ENCODE measurements at regions of chr4 and their contacts with region 1.

Region 1: GRCh38 chr4:102778720-102779119 is 18.0 kb upstream of the MANBA start:
- DNase-seq: peak; percentile 37 to 76 (median 62)
- H3K4me3 ChIP-seq: no peak overlapping the region
- H3K27ac ChIP-seq: no peak overlapping the region
- H3K4me1 ChIP-seq: peaks cover 5 to 6% of the 10 kb centered on the region in 2 donors
- H3K27me3 ChIP-seq: no peaks in the 10 kb centered on the region
- CTCF ChIP-seq: no peak
- POLR2A ChIP-seq: no peak

Region 2: DNA sequence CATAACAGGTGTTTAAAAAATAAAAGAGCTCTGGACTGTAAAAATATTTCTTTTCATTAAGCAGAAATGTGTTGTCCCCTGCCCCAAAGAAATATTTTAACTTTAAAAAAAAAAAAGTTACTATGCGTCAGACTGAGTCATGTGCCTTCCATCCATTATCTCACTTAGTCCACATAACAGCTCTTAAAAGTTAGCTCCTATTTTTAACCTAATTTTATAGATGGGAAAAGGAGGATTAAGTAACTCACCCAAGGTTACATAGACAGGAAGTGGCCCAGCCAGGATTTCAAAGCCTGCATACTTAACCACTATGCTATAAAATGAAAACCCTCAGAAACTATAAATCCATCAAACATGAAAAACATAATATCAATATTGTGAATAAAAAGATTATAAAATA is 115.6 kb before region 1 on chr4:
- intact Hi-C with region 1: loop called in 1 of 2 experiments (anchors 10 kb)
- DNase-seq: peak in 1 of 7 donors; percentile 13
- H3K4me3 ChIP-seq: no peak overlapping the region
- H3K27ac ChIP-seq: peak overlapping the region in 1 of 5 donors; percentile 35
- H3K4me1 ChIP-seq: peaks cover 4 to 9% of the 10 kb centered on the region in 2 donors
- H3K27me3 ChIP-seq: no peaks in the 10 kb centered on the region
- CTCF ChIP-seq: no peak
- POLR2A ChIP-seq: no peak

Region 3: GRCh38 chr4:102674881-102675540 is 103.7 kb before region 1 on chr4:
- intact Hi-C with region 1: no loop called
- DNase-seq: peak in 3 of 7 donors; percentile 22 to 29 (median 24)
- H3K4me3 ChIP-seq: no peak overlapping the region
- H3K27ac ChIP-seq: peak overlapping the region in 3 of 5 donors; percentile 1 to 23 (median 8)
- H3K4me1 ChIP-seq: peaks cover 12 to 16% of the 10 kb centered on the region in 2 donors
- H3K27me3 ChIP-seq: no peaks in the 10 kb centered on the region
- CTCF ChIP-seq: no peak
- POLR2A ChIP-seq: peak in 1 of 2 donors; percentile 10

Region 4: GRCh38 chr4:102685768-102686167 is 93.0 kb before region 1 on chr4:
- intact Hi-C with region 1: no loop called
- DNase-seq: no peak
- H3K4me3 ChIP-seq: no peak overlapping the region
- H3K27ac ChIP-seq: peak overlapping the region in 1 of 5 donors; percentile 15
- H3K4me1 ChIP-seq: no peaks in the 10 kb centered on the region
- H3K27me3 ChIP-seq: no peaks in the 10 kb centered on the region
- CTCF ChIP-seq: no peak
- POLR2A ChIP-seq: no peak

Measured in adrenal gland (tissue), 19 donors.